Ascending aorta (tissue), 2 donors: ENCODE measurements at regions of chr20 and their contacts with region 1.

Region 1: DNA sequence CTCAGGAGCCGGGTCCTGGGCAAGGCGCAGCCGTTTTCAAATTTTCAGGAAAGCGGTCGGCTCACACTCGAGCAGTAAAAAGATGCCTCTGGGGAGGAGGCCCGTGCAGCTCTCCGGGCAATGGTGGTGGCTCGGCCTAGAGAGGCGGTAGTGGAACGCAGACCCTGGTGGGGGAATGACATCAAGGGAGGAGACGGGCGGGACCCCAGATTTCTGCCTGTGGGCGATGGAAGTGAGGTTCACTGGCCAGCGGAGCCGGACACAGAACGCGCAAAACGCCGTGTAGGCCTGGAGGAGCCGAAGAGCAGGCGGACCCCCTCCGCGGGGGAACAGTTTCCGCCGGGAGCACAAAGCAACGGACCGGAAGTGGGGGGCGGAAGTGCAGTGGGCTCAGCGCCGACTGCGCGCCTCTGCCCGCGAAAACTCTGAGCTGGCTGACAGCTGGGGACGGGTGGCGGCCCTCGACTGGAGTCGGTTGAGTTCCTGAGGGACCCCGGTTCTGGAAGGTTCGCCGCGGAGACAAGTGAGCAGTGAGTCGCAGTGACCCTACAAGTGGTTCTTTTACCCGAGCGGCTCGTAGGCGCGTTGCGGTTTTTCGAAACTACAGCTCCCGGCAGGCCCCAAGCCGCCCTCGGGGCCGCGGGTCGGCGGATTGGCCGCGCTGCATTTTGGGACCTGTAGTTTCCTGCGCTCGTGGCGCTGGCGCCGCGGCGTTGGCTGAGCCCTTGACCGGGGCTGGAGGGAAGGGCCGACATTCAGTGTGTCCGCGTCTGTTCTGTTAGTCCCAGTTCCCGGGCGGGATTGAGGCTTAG is at the start of gene RTEL1:
- DNase-seq: peak; percentile 59 to 96
- H3K4me3 ChIP-seq: peak within 1 kb of the TSS; percentile 67 to 83
- H3K27ac ChIP-seq: peak within 1 kb of the TSS; percentile 78 to 88
- H3K4me1 ChIP-seq: peaks cover 7 to 18% of the 10 kb centered on the region in 2 donors
- H3K27me3 ChIP-seq: no peaks in the 10 kb centered on the region
- CTCF ChIP-seq: no peak
- total RNA-seq, gene RTEL1: 80.6 TPM

Region 2: DNA sequence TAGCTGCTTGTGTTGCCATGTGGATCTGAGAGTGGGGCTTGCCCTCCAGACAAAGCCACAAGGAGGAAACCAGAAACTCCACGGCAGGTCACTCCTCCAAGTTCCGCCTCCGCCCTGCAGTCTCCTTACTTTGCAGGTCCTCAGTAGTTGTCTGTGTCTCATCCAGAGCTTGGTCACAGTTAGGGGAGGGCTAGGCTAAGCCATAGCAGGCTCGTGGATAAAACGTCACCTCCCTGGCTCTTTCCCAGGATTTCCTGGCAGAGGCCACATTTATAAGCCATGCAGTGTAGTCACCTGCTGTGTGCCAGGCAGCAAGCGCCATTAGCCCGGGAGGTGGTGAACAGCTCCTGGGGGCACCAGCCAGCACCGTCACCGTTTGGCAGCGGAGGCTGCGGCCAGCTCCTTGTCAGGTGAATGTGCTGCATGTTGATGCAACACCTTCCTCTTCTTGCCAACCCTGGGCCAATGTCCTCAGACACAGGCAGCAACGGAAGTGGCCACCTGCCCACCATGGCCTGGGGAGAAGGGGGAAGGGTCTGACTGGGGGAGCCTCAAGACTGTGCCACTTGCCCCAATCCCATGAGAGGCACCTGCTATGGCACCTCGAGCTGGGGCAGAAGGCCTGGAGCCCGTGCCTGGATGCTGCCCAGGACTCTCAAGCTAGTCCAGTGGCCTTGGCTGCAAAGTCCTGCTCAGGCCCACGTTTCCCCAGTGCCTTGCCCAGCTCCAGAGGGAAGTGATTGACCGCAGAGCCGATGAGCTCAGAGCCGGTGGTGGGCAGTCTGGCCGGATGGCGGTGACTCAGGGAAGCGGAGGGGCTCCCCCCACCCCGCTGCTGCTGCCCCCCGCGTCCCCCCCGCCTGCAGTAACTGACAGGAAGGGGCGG is 1054.9 kb before region 1 on chr20:
- intact Hi-C with region 1: no loop called
- DNase-seq: peak; percentile 59 to 79
- H3K4me3 ChIP-seq: no peak overlapping the region
- H3K27ac ChIP-seq: peak overlapping the region in 1 of 2 donors; percentile 47
- H3K4me1 ChIP-seq: peaks cover 3 to 5% of the 10 kb centered on the region in 2 donors
- H3K27me3 ChIP-seq: no peaks in the 10 kb centered on the region
- CTCF ChIP-seq: no peak

Region 3: GRCh38 chr20:63641792-63642544 is 16.2 kb before region 1 on chr20:
- intact Hi-C with region 1: loop called (anchors 2 kb)
- DNase-seq: peak; percentile 57 to 89
- H3K4me3 ChIP-seq: peak overlapping the region; percentile 64 to 70
- H3K27ac ChIP-seq: peak overlapping the region in 1 of 2 donors; percentile 65
- H3K4me1 ChIP-seq: peaks cover 6 to 7% of the 10 kb centered on the region in 2 donors
- H3K27me3 ChIP-seq: no peaks in the 10 kb centered on the region
- CTCF ChIP-seq: peak in 2 of 3 experiments; percentile 23 to 35

Region 4: DNA sequence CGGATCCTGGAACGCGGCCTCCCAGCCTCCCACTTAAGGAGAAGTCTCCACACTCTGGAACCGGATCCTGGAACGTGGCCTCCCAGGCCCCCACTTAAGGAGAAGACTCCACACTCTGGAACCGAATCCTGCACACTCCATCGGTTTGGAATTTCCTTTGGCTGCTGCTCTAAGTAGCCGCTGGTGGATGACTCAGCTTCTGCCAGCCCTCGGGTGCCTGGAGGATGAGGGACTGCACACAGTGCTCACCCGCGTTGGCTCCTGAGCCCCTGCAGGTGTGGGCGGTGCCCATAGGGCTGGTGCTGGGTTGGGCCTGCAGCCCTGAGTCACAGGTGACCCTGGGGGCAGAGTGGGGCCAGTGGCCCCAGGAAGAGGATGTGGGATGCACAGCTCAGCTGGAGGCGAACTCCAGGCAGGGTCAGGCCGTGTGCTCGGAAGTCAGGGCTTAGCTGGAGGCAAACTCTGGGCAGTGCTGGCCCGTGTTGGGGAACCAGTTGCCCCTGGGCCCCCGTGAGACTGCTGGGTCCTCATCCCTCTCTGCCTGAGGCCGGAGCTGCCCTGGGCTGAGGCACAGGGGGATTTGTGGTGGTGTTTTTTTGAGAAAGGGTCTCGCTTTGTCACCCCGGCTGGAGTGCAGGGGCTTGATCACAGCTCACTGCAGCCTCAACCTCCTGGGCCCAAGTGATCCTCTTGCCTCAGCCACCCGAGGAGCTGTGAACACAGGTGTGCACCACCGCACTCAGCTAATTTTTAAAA is 24.4 kb after region 1 on chr20:
- intact Hi-C with region 1: loop called (anchors 1 kb)
- DNase-seq: peak; percentile 79 to 93
- H3K4me3 ChIP-seq: peak overlapping the region in 1 of 2 donors; percentile 29
- H3K27ac ChIP-seq: peak overlapping the region; percentile 90 to 98
- H3K4me1 ChIP-seq: peaks cover 11 to 31% of the 10 kb centered on the region in 2 donors
- H3K27me3 ChIP-seq: no peaks in the 10 kb centered on the region
- CTCF ChIP-seq: no peak

Region 5: GRCh38 chr20:63707549-63708300 is 49.6 kb after region 1 on chr20 and contains the starts of genes ARFRP1 and ZGPAT:
- intact Hi-C with region 1: loop called (anchors 1 kb)
- DNase-seq: peak in 1 of 2 donors; percentile 94
- H3K4me3 ChIP-seq: peak within 1 kb of the TSS; percentile 80 to 88
- H3K27ac ChIP-seq: peak within 1 kb of the TSS; percentile 86 to 94
- H3K4me1 ChIP-seq: peaks cover 6 to 14% of the 10 kb centered on the region in 2 donors
- H3K27me3 ChIP-seq: no peaks in the 10 kb centered on the region
- CTCF ChIP-seq: no peak
- total RNA-seq, gene ARFRP1: 50.8 TPM
- total RNA-seq, gene ZGPAT: 42.4 TPM